ENCODE measurements at regions of chr11 and their contacts with region 1.

Region 1: GRCh38 chr11:41446107-41446506 is 13.3 kb downstream of the LRRC4C start:
- DNase-seq: no peak
- H3K4me3 ChIP-seq: no peak overlapping the region
- H3K27me3 ChIP-seq: no peaks in the 10 kb centered on the region
- CTCF ChIP-seq: no peak

Region 2: DNA sequence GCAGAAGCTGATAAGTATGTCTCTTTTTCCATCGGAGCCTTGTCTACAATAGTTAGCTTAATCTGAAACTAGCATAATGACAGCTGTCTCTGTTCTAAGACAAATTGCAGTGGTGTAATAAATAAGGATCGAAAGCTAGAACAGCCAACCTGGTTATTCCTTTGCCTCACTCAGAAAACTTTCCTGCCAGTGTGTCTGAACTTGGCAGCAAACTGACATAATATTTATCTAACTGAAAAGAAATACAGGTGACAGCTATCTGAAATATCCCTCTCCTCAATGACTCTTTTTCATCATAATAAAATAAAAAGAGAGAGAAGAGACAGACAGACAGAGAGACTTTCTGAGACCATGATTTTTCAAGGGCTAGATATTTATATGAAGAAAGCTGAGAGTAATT is 629.1 kb before region 1 on chr11:
- CTCF ChIA-PET with region 1: no interaction called
- POLR2A ChIA-PET with region 1: no interaction called
- DNase-seq: no peak
- H3K4me3 ChIP-seq: no peak overlapping the region
- H3K27me3 ChIP-seq: no peaks in the 10 kb centered on the region
- CTCF ChIP-seq: no peak

Region 3: GRCh38 chr11:41435531-41435930 is 10.6 kb before region 1 on chr11:
- CTCF ChIA-PET with region 1: no interaction called
- POLR2A ChIA-PET with region 1: no interaction called
- DNase-seq: no peak
- H3K4me3 ChIP-seq: no peak overlapping the region
- H3K27me3 ChIP-seq: no peaks in the 10 kb centered on the region
- CTCF ChIP-seq: no peak

Region 4: DNA sequence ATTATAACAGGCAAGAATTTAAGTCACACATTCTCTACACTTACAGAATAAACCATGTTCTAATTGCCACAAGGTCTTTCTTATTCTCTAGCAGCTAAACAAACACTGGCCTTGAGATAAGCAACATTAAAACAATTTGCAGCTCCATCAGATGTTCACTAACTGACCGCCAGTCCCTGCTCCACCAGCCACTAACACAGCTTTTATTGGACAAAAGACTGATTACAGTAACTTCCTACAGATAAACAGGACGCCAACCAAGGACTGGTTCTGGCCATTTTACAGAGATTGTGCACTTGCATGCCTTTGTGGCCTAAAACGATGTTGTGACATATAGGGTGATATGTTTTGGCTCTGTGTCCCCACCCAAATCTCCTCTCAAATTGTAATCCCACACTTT is 402.2 kb after region 1 on chr11:
- CTCF ChIA-PET with region 1: no interaction called
- POLR2A ChIA-PET with region 1: interaction called, 12 read pairs
- DNase-seq: no peak
- H3K4me3 ChIP-seq: no peak overlapping the region
- H3K27me3 ChIP-seq: no peaks in the 10 kb centered on the region
- CTCF ChIP-seq: no peak